Cardiac septum (tissue), 1 donor: ENCODE measurements at regions of chr5 and their contacts with region 1.

Region 1: DNA sequence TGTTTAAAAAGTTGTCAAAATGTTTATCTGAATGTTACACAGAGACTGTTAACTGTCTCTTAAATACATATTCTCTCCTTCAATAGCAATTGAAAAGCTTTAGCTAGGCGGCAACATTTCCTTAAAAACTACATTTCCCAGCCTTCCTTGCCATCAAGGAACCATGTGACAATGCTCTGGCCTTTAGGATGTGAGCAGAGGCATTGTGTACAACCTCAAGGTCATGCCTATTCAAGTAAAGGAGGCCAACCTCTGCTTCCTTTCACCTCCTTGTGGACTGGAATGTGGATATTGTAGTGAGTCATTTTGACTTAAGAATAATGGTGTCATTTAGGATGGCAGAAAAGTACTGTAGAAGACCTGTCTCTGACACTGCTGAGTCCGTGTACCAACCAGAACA is 23.7 kb upstream of the MROH2B start:
- DNase-seq: no peak

Region 2: GRCh38 chr5:40914835-40915234 is 180.0 kb before region 1 on chr5:
- intact Hi-C with region 1: loop called (anchors 5 kb)
- DNase-seq: no peak

Region 3: GRCh38 chr5:41524174-41524573 is 429.3 kb after region 1 on chr5:
- intact Hi-C with region 1: loop called (anchors 10 kb)
- DNase-seq: no peak